CD4-positive, alpha-beta T cell (primary cell): ENCODE measurements at regions of chr18 and their contacts with region 1.

Region 1: DNA sequence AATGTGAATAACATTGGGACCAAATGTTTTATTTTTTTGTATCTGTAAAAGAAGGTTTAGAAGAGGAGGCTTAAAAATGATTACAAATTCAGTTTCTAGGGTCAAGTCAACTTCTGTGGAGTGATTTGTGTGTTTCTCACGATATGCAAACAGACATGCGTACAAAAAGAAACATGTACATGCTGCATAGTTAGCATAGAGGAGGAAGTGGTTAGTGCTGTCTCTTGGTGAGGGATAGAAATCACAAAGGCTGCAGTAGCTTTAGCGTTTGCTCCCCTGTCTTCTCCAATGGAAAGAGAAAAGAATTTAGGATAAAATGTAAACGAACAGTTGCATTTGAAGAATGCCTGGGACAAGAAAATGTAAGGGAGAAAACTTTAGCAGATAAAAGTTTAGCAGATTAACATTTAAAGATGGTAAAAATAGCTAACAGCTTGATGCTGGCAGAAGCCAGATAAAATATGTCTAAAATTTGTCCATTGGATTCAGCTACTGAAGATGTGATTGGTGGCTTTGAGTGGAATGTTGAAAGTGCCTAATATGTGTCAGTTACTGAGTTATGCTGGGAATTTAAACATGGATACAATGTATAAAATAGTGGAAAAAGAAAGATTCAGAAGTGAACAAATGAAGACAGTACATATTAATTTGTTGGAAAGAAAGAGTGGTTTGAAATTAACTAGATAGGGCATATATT is 44.9 kb downstream of the MALT1 start:
- DNase-seq: peak in 4 of 14 experiments; percentile 13 to 73 (median 65)
- ATAC-seq: peak; percentile 83
- H3K4me3 ChIP-seq: no peak overlapping the region
- H3K4me3 Mint-ChIP-seq: peak overlapping the region; percentile 74
- H3K27ac ChIP-seq: no peak overlapping the region
- H3K27ac Mint-ChIP-seq: peak overlapping the region; percentile 89
- H3K4me1 ChIP-seq: peaks cover 16% of the 10 kb centered on the region
- H3K4me1 Mint-ChIP-seq: peaks cover 73% of the 10 kb centered on the region
- H3K27me3 ChIP-seq: no peaks in the 10 kb centered on the region
- H3K27me3 Mint-ChIP-seq: no peaks in the 10 kb centered on the region
- CTCF ChIP-seq: no peak

Region 2: DNA sequence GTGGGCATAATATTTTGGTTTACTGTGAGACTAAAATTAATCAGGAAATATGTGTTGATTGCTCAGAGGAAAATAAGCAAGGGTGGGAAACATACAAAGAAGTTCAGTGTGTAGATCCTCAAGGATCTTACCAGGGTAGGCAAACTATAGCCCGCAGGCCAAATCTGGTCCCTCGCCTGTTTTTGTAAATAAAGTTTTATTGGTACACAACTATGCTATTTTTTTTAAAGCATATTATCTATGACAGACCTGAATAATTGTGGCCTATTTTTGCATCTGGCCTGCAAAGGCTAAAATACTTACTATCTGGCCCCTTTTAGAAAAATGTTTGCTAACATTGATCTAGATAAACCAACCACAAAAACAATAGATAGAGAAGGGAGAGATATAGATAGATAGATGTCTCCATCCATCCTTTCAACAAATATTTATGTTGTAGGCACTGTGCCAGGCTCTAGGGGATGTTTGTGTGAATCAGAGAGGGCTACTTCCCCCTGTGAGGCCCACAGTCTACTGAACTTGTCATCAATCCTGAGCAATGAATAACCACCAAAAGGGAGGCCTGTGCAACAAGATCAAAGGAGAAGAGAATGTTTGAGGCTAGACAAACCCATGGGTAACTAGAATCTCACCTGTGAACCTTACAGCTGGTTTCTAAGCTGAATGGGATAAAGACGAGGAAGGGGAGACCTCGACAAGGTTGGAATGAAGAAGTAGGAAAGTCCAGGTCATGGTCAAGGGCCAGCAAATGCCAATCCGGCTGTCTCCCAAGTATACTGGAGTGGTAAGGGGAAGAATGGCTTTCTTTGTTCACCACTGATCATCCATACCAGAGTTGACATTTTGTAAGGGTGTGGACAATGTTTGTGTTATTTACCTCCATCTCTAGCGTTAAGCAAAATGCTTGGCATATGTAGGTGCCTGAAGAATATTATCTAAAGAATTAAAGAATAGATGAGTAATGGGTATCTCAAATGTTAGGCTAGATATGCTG is 110.9 kb before region 1 on chr18:
- CTCF ChIA-PET with region 1: no interaction called
- POLR2A ChIA-PET with region 1: no interaction called
- intact Hi-C with region 1: no loop called
- DNase-seq: peak in 11 of 14 experiments; percentile 8 to 66 (median 42)
- ATAC-seq: peak; percentile 82
- H3K4me3 ChIP-seq: no peak overlapping the region
- H3K4me3 Mint-ChIP-seq: peak overlapping the region; percentile 49
- H3K27ac ChIP-seq: no peak overlapping the region
- H3K27ac Mint-ChIP-seq: peak overlapping the region; percentile 57
- H3K4me1 ChIP-seq: peaks cover 34% of the 10 kb centered on the region
- H3K4me1 Mint-ChIP-seq: peaks cover 53% of the 10 kb centered on the region
- H3K27me3 ChIP-seq: no peaks in the 10 kb centered on the region
- H3K27me3 Mint-ChIP-seq: no peaks in the 10 kb centered on the region
- CTCF ChIP-seq: no peak

Region 3: DNA sequence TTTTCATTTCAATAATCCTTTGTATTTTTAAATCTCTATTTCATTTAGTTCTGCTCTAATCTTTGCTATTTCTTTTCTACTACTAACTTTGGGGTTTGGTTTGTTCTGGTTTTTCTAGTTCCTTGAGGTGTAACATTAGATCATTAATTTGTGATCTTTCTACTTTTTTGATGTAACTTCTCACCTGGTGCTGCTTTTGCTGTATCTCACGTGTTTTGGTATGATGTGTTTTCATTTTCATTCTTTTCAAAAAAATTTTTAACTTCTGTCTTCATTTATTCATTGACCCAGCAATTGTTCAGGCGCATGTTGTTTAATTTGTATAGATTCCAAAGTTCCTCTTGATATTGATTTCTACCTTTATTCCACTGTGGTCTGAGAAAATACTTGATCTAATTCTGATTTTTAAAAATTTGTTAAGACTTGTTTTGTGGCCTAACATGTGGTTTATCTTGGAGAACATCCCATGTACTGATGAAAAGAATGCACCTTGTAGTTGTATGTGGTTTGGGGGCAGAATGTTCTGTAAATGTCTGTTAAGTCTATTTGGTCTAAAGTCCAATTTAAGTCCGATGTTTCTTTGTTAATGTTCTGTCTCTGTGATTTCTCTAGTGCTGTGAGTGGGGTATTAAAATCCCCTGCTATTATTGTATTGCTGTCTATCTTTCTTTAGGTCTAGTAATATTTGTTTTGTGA is 62.2 kb before region 1 on chr18:
- CTCF ChIA-PET with region 1: no interaction called
- POLR2A ChIA-PET with region 1: interaction called, 11 read pairs
- intact Hi-C with region 1: no loop called
- DNase-seq: no peak
- ATAC-seq: no peak
- H3K4me3 ChIP-seq: no peak overlapping the region
- H3K4me3 Mint-ChIP-seq: peak overlapping the region; percentile 2
- H3K27ac ChIP-seq: no peak overlapping the region
- H3K27ac Mint-ChIP-seq: peak overlapping the region; percentile 31
- H3K4me1 ChIP-seq: peaks cover 47% of the 10 kb centered on the region
- H3K4me1 Mint-ChIP-seq: peaks cover 88% of the 10 kb centered on the region
- H3K27me3 ChIP-seq: no peaks in the 10 kb centered on the region
- H3K27me3 Mint-ChIP-seq: no peaks in the 10 kb centered on the region
- CTCF ChIP-seq: no peak

Region 4: GRCh38 chr18:58699551-58699950 is 16.7 kb before region 1 on chr18:
- CTCF ChIA-PET with region 1: interaction called, 4 read pairs
- POLR2A ChIA-PET with region 1: interaction called, 5 read pairs
- intact Hi-C with region 1: loop called in 1 of 2 experiments (anchors 1 kb)
- DNase-seq: peak in 3 of 14 experiments; percentile 40 to 46 (median 43)
- ATAC-seq: no peak
- H3K4me3 ChIP-seq: no peak overlapping the region
- H3K4me3 Mint-ChIP-seq: no peak overlapping the region
- H3K27ac ChIP-seq: no peak overlapping the region
- H3K27ac Mint-ChIP-seq: no peak overlapping the region
- H3K4me1 ChIP-seq: peaks cover 28% of the 10 kb centered on the region
- H3K4me1 Mint-ChIP-seq: peaks cover 44% of the 10 kb centered on the region
- H3K27me3 ChIP-seq: no peaks in the 10 kb centered on the region
- H3K27me3 Mint-ChIP-seq: no peaks in the 10 kb centered on the region
- CTCF ChIP-seq: no peak